Caco-2 (cell line): ENCODE measurements at regions of chr12 and their contacts with region 1.

Region 1: GRCh38 chr12:93563807-93564538 is 8.5 kb upstream of the SOCS2 start:
- DNase-seq: peak; percentile 82 to 85
- H3K4me3 ChIP-seq: no peak overlapping the region
- H3K4me3 Mint-ChIP-seq: peak overlapping the region; percentile 47
- H3K27ac Mint-ChIP-seq: peak overlapping the region; percentile 64
- H3K4me1 ChIP-seq: peaks cover 31% of the 10 kb centered on the region
- H3K4me1 Mint-ChIP-seq: peaks cover 33% of the 10 kb centered on the region
- H3K27me3 ChIP-seq: no peaks in the 10 kb centered on the region
- H3K27me3 Mint-ChIP-seq: no peaks in the 10 kb centered on the region
- CTCF ChIP-seq: no peak

Region 2: GRCh38 chr12:93502802-93503623 is 61.0 kb before region 1 on chr12:
- CTCF ChIA-PET with region 1: interaction called, 6 read pairs
- POLR2A ChIA-PET with region 1: no interaction called
- intact Hi-C with region 1: loop called (anchors 2 kb)
- DNase-seq: peak in 1 of 2 experiments; percentile 67
- H3K4me3 ChIP-seq: no peak overlapping the region
- H3K4me3 Mint-ChIP-seq: no peak overlapping the region
- H3K27ac Mint-ChIP-seq: no peak overlapping the region
- H3K4me1 ChIP-seq: no peaks in the 10 kb centered on the region
- H3K4me1 Mint-ChIP-seq: no peaks in the 10 kb centered on the region
- H3K27me3 ChIP-seq: no peaks in the 10 kb centered on the region
- H3K27me3 Mint-ChIP-seq: no peaks in the 10 kb centered on the region
- CTCF ChIP-seq: peak; percentile 75 to 76

Region 3: DNA sequence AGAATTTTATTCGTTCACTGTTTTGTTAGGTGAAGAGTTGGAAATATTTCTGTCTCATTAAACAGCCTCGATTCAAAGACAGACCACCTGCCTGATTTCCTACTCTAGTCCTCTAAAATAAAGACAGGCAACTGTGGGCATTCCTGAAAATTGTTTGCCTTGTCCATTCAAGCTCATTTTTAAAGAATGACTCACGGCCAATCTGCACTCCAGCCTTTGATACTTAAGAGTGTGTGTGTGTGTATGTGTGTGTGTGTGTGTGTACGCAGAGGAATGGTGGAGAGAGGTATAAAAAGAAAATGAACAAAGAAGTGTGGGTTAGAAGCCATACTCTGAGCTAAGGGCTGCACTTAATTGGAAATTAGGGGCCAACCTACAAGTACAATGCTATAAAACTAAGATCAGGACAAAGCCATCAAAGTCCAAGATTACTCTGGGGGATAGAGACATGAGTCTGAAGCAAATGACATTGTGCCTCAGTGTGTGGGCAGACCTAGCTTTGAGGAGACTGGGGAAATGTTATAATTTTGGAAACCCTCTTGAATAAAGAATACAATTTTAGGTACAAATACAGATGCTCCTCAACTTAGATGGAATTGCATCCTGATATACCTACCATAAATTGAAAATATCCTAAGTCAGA is 37.1 kb before region 1 on chr12:
- CTCF ChIA-PET with region 1: interaction called, 3 read pairs
- POLR2A ChIA-PET with region 1: interaction called, 3 read pairs
- intact Hi-C with region 1: loop called (anchors 1 kb)
- DNase-seq: peak; percentile 84
- H3K4me3 ChIP-seq: no peak overlapping the region
- H3K4me3 Mint-ChIP-seq: peak overlapping the region; percentile 35
- H3K27ac Mint-ChIP-seq: peak overlapping the region; percentile 64
- H3K4me1 ChIP-seq: peaks cover 36% of the 10 kb centered on the region
- H3K4me1 Mint-ChIP-seq: peaks cover 34% of the 10 kb centered on the region
- H3K27me3 ChIP-seq: no peaks in the 10 kb centered on the region
- H3K27me3 Mint-ChIP-seq: no peaks in the 10 kb centered on the region
- CTCF ChIP-seq: no peak

Region 4: GRCh38 chr12:93549174-93549573 is 14.8 kb before region 1 on chr12:
- CTCF ChIA-PET with region 1: no interaction called
- POLR2A ChIA-PET with region 1: no interaction called
- intact Hi-C with region 1: loop called (anchors 2 kb)
- DNase-seq: no peak
- H3K4me3 ChIP-seq: no peak overlapping the region
- H3K4me3 Mint-ChIP-seq: no peak overlapping the region
- H3K27ac Mint-ChIP-seq: no peak overlapping the region
- H3K4me1 ChIP-seq: no peaks in the 10 kb centered on the region
- H3K4me1 Mint-ChIP-seq: no peaks in the 10 kb centered on the region
- H3K27me3 ChIP-seq: no peaks in the 10 kb centered on the region
- H3K27me3 Mint-ChIP-seq: no peaks in the 10 kb centered on the region
- CTCF ChIP-seq: no peak

Region 5: GRCh38 chr12:93638095-93638494 is 74.1 kb after region 1 on chr12:
- CTCF ChIA-PET with region 1: no interaction called
- POLR2A ChIA-PET with region 1: no interaction called
- intact Hi-C with region 1: no loop called
- DNase-seq: no peak
- H3K4me3 ChIP-seq: no peak overlapping the region
- H3K4me3 Mint-ChIP-seq: no peak overlapping the region
- H3K27ac Mint-ChIP-seq: no peak overlapping the region
- H3K4me1 ChIP-seq: no peaks in the 10 kb centered on the region
- H3K4me1 Mint-ChIP-seq: peaks cover 7% of the 10 kb centered on the region
- H3K27me3 ChIP-seq: no peaks in the 10 kb centered on the region
- H3K27me3 Mint-ChIP-seq: no peaks in the 10 kb centered on the region
- CTCF ChIP-seq: no peak

Region 6: GRCh38 chr12:93733358-93733757 is 169.4 kb after region 1 on chr12:
- CTCF ChIA-PET with region 1: no interaction called
- POLR2A ChIA-PET with region 1: no interaction called
- intact Hi-C with region 1: no loop called
- DNase-seq: no peak
- H3K4me3 ChIP-seq: no peak overlapping the region
- H3K4me3 Mint-ChIP-seq: no peak overlapping the region
- H3K27ac Mint-ChIP-seq: no peak overlapping the region
- H3K4me1 ChIP-seq: peaks cover 26% of the 10 kb centered on the region
- H3K4me1 Mint-ChIP-seq: peaks cover 40% of the 10 kb centered on the region
- H3K27me3 ChIP-seq: no peaks in the 10 kb centered on the region
- H3K27me3 Mint-ChIP-seq: no peaks in the 10 kb centered on the region
- CTCF ChIP-seq: no peak